Activated naive CD4-positive, alpha-beta T cell treated with anti-CD3 and anti-CD28 coated beads for 36 hours (primary cell): ENCODE measurements at regions of chr1 and their contacts with region 1.

Region 1: DNA sequence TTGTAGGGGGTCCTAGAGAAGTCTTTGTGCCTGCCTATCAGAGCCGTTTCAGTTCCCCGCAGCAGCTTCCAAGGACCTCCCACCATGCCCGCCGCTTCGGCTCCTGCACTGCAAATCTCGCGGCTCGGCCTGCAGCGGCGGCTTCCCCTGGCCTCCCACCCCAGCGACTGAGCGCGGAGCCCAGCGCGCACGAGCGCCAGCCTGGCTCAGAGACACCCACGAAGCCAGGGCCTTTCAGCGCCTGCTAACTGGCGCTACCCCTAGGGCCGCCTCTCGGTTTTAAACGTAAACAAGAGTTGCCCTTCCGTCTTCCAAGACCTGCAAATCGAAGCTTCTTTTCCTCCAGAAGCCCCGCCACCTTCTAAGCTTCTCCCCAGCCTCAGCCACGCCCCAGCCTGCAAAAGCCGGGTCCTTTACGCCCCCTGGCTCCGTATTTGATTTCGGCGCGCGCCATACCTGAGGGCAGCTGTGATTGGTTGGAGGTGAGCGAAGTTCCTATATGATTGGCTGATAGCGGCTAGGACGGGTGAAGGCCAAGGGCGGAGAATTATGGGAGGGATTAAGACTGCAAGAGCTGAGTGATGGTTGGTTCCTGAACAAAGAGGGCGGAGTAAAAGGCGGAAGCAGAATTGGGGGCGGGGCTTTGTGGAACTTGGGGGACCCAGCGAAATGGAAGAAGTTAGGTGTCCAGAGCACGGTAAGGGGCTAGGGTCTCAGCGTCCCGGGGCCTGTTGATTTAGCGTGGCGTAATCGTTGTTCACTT is at the start of gene TTF2:
- DNase-seq: peak; percentile 98
- H3K4me3 Mint-ChIP-seq: no peak within 1 kb of the TSS
- H3K27ac Mint-ChIP-seq: no peak within 1 kb of the TSS
- H3K4me1 Mint-ChIP-seq: peaks cover 41% of the 10 kb centered on the region
- H3K27me3 Mint-ChIP-seq: no peaks in the 10 kb centered on the region
- total RNA-seq, gene TTF2: 113 to 122 TPM

Region 2: DNA sequence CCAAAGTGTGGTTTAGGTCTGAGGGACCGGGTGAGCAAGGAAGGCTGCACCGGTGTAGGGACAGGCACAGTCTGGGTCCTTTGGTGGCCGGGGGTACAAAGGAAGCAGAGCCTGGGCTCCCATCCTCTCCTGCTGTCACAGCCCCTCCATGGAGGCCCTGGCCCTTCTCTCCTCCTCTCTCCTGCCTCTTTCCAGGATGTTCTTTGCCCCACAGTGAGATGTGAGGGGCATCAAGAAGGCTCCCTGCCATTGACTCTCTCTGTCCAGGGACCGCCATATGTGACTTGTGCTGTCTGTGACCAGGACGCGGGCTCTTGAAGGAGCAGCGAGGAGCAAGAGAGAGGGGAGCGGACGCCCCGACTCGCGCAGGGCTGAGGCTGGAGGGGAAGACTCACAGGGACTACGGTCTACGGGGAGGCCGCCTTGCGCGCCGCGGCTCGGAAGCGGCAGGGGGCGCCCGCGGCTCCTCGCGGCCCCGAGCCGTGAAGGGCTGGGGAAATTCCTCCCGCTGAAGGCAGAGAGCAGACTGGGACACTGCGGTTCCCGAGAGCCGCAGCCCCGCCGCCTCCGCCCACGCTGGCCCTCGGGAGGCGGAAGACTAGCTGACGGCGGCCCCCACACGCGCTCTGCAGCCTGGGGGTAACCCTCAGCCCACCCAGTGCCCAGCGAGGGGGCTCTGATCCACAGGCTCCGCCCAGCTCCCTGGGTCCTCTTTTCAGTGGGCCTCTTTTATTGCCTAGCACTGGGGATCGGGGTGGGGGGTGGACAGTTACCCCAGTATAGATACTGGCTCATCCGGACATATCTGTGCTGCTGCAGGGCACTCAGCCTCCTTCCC is 907.9 kb before region 1 on chr1:
- CTCF ChIA-PET with region 1: no interaction called
- intact Hi-C with region 1: loop called (anchors 5 kb)
- DNase-seq: peak; percentile 86
- H3K4me3 Mint-ChIP-seq: peak overlapping the region; percentile 60
- H3K27ac Mint-ChIP-seq: peak overlapping the region; percentile 14
- H3K4me1 Mint-ChIP-seq: peaks cover 18% of the 10 kb centered on the region
- H3K27me3 Mint-ChIP-seq: no peaks in the 10 kb centered on the region

Region 3: DNA sequence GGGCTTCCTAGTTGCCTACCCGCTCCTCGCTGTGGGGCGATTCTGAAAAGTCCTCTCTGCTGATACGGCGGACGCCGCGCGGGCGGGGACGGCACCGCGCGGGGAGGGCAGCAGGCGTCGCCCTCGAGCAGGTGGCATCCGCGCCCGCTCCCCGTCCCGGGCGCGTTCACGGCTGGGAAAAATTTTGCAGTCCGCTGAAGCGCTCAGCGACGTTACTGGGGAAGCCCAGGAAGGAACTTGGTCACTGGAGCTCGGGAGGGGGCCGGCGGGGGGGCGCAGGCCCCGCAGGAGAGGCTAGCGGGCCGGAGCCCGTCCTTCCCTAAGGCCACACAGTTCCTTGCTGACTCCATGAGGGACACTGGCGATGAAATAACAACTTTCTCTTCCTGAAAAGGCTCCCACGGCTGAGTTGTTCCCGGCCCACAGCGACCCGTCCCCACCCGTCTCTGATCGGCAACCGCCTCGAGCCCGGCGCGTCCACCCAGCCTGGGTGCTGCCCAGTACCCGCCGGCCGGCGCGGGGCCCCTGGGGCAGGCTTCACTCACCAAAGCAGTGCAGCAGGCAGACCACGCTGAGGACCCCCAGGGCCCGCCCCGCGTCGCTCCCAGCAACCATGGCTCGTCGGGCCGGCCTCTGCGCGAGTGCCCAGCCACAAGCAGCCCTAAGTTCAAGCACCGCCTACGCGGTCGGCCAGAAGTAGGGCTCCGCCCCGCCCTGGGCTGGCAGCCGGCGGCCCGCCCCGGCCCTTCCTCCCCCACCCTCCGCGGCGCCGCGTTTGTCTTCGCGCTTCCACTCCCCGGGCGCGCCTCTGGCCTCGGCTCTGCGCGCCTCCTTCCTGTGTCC is 489.3 kb before region 1 on chr1 and contains the start of gene CD58:
- CTCF ChIA-PET with region 1: interaction called, 12 read pairs
- intact Hi-C with region 1: loop called (anchors 1 kb)
- DNase-seq: peak; percentile 80
- H3K4me3 Mint-ChIP-seq: peak within 1 kb of the TSS; percentile 81
- H3K27ac Mint-ChIP-seq: peak within 1 kb of the TSS; percentile 38
- H3K4me1 Mint-ChIP-seq: peaks cover 39% of the 10 kb centered on the region
- H3K27me3 Mint-ChIP-seq: peaks cover 7% of the 10 kb centered on the region
- total RNA-seq, gene CD58: 3.9 to 4.2 TPM

Region 4: DNA sequence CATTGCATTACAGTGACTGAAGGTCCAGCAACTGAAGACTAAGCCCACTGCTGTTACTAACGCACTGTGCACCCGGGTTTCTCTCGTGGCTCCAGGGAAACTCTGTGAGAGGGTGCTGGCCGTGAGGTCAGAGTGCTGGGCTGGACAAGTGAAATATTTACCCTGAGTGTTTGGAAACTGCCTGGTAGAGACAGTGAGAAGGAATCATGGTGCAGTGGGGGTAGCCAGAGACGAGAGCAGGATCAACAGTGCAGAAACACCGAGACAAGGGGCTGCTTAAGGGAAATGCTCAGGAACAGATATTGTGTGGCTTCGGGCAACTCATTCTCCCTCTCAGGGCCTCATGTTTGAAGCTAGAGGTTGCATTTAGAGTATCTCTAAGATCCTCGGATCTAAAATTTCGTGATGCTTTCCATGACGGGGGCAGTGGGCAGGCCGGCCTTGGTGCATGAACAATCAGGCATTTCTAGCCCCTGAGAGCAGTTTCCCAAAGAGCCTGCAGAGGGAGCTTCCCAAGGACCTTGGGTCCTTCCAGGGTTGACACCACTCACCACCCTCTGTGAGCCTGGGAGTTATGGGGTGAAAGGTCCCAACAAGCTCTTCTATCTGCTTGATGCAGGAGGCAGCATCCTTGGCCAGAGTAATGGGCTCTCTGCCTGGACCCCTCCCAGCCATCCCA is 295.9 kb before region 1 on chr1:
- CTCF ChIA-PET with region 1: interaction called, 8 read pairs
- intact Hi-C with region 1: loop called (anchors 1 kb)
- DNase-seq: peak; percentile 68
- H3K4me3 Mint-ChIP-seq: peak overlapping the region; percentile 100
- H3K27ac Mint-ChIP-seq: peak overlapping the region; percentile 100
- H3K4me1 Mint-ChIP-seq: peaks cover 87% of the 10 kb centered on the region
- H3K27me3 Mint-ChIP-seq: no peaks in the 10 kb centered on the region

Region 5: GRCh38 chr1:116847688-116848531 is 211.9 kb before region 1 on chr1:
- CTCF ChIA-PET with region 1: no interaction called
- intact Hi-C with region 1: loop called (anchors 1 kb)
- DNase-seq: peak; percentile 62
- H3K4me3 Mint-ChIP-seq: no peak overlapping the region
- H3K27ac Mint-ChIP-seq: peak overlapping the region; percentile 51
- H3K4me1 Mint-ChIP-seq: peaks cover 37% of the 10 kb centered on the region
- H3K27me3 Mint-ChIP-seq: no peaks in the 10 kb centered on the region

Region 6: GRCh38 chr1:116951200-116951935 is 108.5 kb before region 1 on chr1:
- CTCF ChIA-PET with region 1: no interaction called
- intact Hi-C with region 1: no loop called
- DNase-seq: no peak
- H3K4me3 Mint-ChIP-seq: no peak overlapping the region
- H3K27ac Mint-ChIP-seq: no peak overlapping the region
- H3K4me1 Mint-ChIP-seq: no peaks in the 10 kb centered on the region
- H3K27me3 Mint-ChIP-seq: no peaks in the 10 kb centered on the region

Region 7: GRCh38 chr1:117077267-117077666 is 17.4 kb after region 1 on chr1:
- CTCF ChIA-PET with region 1: interaction called, 4 read pairs
- intact Hi-C with region 1: loop called (anchors 1 kb)
- DNase-seq: peak; percentile 79
- H3K4me3 Mint-ChIP-seq: no peak overlapping the region
- H3K27ac Mint-ChIP-seq: peak overlapping the region; percentile 76
- H3K4me1 Mint-ChIP-seq: peaks cover 38% of the 10 kb centered on the region
- H3K27me3 Mint-ChIP-seq: no peaks in the 10 kb centered on the region

Region 8: GRCh38 chr1:117110774-117111173 is 50.9 kb after region 1 on chr1:
- CTCF ChIA-PET with region 1: no interaction called
- intact Hi-C with region 1: no loop called
- DNase-seq: no peak
- H3K4me3 Mint-ChIP-seq: no peak overlapping the region
- H3K27ac Mint-ChIP-seq: no peak overlapping the region
- H3K4me1 Mint-ChIP-seq: peaks cover 13% of the 10 kb centered on the region
- H3K27me3 Mint-ChIP-seq: no peaks in the 10 kb centered on the region

Region 9: GRCh38 chr1:117534995-117535467 is 475.2 kb after region 1 on chr1:
- CTCF ChIA-PET with region 1: no interaction called
- intact Hi-C with region 1: loop called (anchors 5 kb)
- DNase-seq: peak; percentile 50
- H3K4me3 Mint-ChIP-seq: no peak overlapping the region
- H3K27ac Mint-ChIP-seq: no peak overlapping the region
- H3K4me1 Mint-ChIP-seq: peaks cover 23% of the 10 kb centered on the region
- H3K27me3 Mint-ChIP-seq: no peaks in the 10 kb centered on the region